ENCODE measurements at regions of chr5 and their contacts with region 1.

Region 1: GRCh38 chr5:89241186-89241585 is 358.2 kb upstream of the MEF2C start:
- DNase-seq: no peak
- H3K4me3 Mint-ChIP-seq: no peak overlapping the region
- H3K27ac Mint-ChIP-seq: no peak overlapping the region
- H3K4me1 Mint-ChIP-seq: no peaks in the 10 kb centered on the region
- H3K27me3 Mint-ChIP-seq: no peaks in the 10 kb centered on the region
- CTCF ChIP-seq: no peak

Region 2: DNA sequence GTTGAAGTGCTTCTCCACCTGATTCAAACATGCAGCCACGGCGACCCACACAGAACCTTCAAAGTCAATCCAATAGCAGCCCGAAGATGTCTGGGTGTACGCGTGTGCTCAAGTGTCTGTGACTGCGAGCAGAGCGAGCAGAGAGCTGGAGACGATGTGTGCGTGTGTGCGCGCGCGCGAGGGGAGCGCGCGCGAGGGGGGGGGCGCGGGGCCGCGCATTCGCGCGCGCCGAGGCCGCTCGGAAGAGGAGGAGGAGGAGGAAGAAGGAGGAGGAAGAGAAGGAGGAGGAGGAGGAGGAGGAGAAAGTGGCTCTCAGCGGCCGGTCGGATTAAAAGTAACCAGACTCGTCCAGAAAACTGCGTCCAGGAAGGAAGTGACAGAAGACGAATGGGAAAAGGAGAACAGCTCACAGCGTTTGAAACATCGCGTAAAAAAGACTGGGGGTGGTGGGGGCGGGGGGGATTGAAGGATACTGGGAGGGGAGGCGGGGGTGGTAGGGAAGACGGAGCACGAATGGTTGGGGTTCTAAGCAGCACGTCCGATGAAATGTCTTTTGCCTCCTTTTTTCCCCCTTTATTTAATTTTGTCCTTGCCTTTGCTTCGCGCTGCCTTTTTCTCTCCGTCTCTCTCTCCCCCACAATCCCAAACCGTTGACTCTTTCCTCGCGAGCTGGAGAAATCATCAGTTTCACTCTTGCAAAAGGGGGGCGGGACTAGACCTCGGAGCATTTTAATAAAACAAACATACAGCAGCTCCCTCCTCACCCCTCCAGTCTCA is 357.9 kb before region 1 on chr5 and contains the start of gene MEF2C:
- CTCF ChIA-PET with region 1: no interaction called
- intact Hi-C with region 1: loop called (anchors 10 kb)
- DNase-seq: peak; percentile 51
- H3K4me3 Mint-ChIP-seq: peak within 1 kb of the TSS; percentile 93
- H3K27ac Mint-ChIP-seq: peak within 1 kb of the TSS; percentile 70
- H3K4me1 Mint-ChIP-seq: peaks cover under 1% of the 10 kb centered on the region
- H3K27me3 Mint-ChIP-seq: no peaks in the 10 kb centered on the region
- CTCF ChIP-seq: no peak
- total RNA-seq, gene MEF2C: 6.1 and 6.5 TPM in 2 replicates

Region 3: DNA sequence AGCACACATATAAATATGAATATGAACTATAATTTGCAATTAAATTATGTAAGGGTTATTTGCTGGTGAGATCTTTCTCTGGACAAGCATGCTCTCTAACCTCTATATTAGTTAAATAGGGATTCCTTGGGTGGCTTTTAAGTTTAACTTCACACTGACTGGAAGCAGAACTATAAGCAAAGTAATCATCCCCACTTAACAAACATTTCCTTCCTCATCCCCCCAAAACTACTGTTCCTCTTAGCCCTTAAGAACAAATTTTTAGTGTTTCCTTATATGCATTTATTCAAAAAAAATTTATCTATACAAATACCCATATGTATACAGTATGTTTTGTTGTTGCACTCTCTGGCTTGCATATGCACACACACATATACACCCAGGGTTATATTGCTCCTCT is 153.9 kb after region 1 on chr5:
- CTCF ChIA-PET with region 1: no interaction called
- intact Hi-C with region 1: no loop called
- DNase-seq: no peak
- H3K4me3 Mint-ChIP-seq: no peak overlapping the region
- H3K27ac Mint-ChIP-seq: no peak overlapping the region
- H3K4me1 Mint-ChIP-seq: peaks cover 19% of the 10 kb centered on the region
- H3K27me3 Mint-ChIP-seq: no peaks in the 10 kb centered on the region
- CTCF ChIP-seq: no peak

Measured in Calu3 (cell line).